A549 (cell line): ENCODE measurements at regions of chr16 and their contacts with region 1.

Region 1: GRCh38 chr16:15874745-15875314 is 13.6 kb downstream of the CEP20 start:
- DNase-seq: peak; percentile 80 to 87
- ATAC-seq: peak; percentile 90 to 94
- H3K4me3 ChIP-seq: no peak overlapping the region
- H3K27ac ChIP-seq: peak overlapping the region; percentile 90 to 96
- H3K4me1 ChIP-seq: peaks cover 50% of the 10 kb centered on the region
- CTCF ChIP-seq: peak; percentile 75
- EP300 ChIP-seq: no peak
- POLR2A ChIP-seq: no peak
- RAD21 ChIP-seq: peak; percentile 83 to 85

Region 2: GRCh38 chr16:15749366-15749765 is 125.5 kb before region 1 on chr16:
- CTCF ChIA-PET with region 1: no interaction called
- POLR2A ChIA-PET with region 1: no interaction called
- DNase-seq: no peak
- ATAC-seq: peak in 1 of 2 experiments; percentile 25; a peak in 2 of 6 replicates
- H3K4me3 ChIP-seq: no peak overlapping the region
- H3K27ac ChIP-seq: no peak overlapping the region
- H3K4me1 ChIP-seq: no peaks in the 10 kb centered on the region
- CTCF ChIP-seq: no peak
- EP300 ChIP-seq: no peak
- POLR2A ChIP-seq: no peak
- RAD21 ChIP-seq: no peak

Region 3: GRCh38 chr16:15857724-15858560 is 16.9 kb before region 1 on chr16:
- CTCF ChIA-PET with region 1: interaction called, 21 read pairs
- POLR2A ChIA-PET with region 1: no interaction called
- DNase-seq: peak in 1 of 2 experiments; percentile 38
- ATAC-seq: peak; percentile 53 to 58
- H3K4me3 ChIP-seq: peak overlapping the region; percentile 54
- H3K27ac ChIP-seq: peak overlapping the region; percentile 71 to 88
- H3K4me1 ChIP-seq: peaks cover 15% of the 10 kb centered on the region; the same call in 1 of the 3 replicates
- CTCF ChIP-seq: no peak
- EP300 ChIP-seq: no peak
- POLR2A ChIP-seq: no peak
- RAD21 ChIP-seq: no peak

Region 4: GRCh38 chr16:15899538-15900100 is 24.8 kb after region 1 on chr16:
- CTCF ChIA-PET with region 1: interaction called, 12 read pairs
- POLR2A ChIA-PET with region 1: interaction called, 6 read pairs
- DNase-seq: peak; percentile 95
- ATAC-seq: peak; percentile 96 to 99
- H3K4me3 ChIP-seq: no peak overlapping the region
- H3K27ac ChIP-seq: peak overlapping the region; percentile 90 to 91
- H3K4me1 ChIP-seq: peaks cover 50% of the 10 kb centered on the region
- CTCF ChIP-seq: no peak
- EP300 ChIP-seq: peak; percentile 54 to 86; a peak in 2 of 5 replicates
- POLR2A ChIP-seq: no peak
- RAD21 ChIP-seq: peak; percentile 39 to 58

Region 5: DNA sequence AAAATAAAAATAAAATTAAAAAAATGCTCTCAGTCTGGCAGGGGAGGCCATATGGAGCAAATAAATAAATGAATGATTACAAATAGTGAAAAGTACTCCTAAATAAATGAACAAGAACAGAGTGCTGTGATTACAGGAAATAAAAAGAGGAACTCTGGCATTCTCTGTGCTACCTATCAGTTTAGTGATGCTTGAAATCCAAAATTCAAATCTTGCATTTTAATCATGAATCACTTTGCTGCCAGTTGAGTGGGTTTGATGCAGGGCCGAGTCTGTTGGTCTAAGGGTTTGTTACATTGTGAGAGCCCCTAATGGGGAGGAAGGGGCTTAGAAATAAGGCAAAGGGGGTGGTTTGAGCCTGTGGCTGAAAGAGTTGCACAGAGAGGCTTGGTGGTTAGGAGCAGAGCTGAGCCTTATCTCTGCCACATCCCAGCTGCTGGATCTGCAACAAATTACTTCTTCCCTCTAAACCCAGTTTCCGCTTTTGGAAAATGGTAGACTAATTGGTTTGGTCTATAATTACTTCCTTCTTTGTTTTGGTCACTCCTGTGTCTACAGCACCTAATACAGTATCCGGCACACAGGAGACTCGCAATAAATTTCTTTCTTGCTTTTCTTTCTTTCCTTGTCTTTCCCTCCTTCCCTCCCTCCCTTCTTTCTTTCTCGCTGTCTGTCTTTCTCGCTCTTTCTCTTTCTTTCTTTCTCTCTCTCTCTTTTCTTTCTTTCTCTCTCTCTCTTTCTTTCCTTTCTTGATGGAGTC is 68.3 kb after region 1 on chr16:
- CTCF ChIA-PET with region 1: interaction called, 15 read pairs
- POLR2A ChIA-PET with region 1: no interaction called
- DNase-seq: no peak
- ATAC-seq: no peak
- H3K4me3 ChIP-seq: no peak overlapping the region
- H3K27ac ChIP-seq: peak overlapping the region; percentile 7 to 100; a peak in 3 of 6 replicates
- H3K4me1 ChIP-seq: peaks cover 30% of the 10 kb centered on the region
- CTCF ChIP-seq: no peak
- EP300 ChIP-seq: no peak
- POLR2A ChIP-seq: no peak
- RAD21 ChIP-seq: no peak

Region 6: GRCh38 chr16:15996432-15997109 is 121.7 kb after region 1 on chr16:
- CTCF ChIA-PET with region 1: interaction called, 13 read pairs
- POLR2A ChIA-PET with region 1: no interaction called
- DNase-seq: peak; percentile 88 to 94
- ATAC-seq: peak; percentile 77 to 83
- H3K4me3 ChIP-seq: no peak overlapping the region
- H3K27ac ChIP-seq: peak overlapping the region; percentile 85 to 97
- H3K4me1 ChIP-seq: peaks cover 85% of the 10 kb centered on the region
- CTCF ChIP-seq: no peak
- EP300 ChIP-seq: peak; percentile 36 to 61; a peak in 2 of 5 replicates
- POLR2A ChIP-seq: no peak
- RAD21 ChIP-seq: peak; percentile 53 to 60; a peak in 4 of 5 replicates